Activated naive CD4-positive, alpha-beta T cell treated with anti-CD3 and anti-CD28 coated beads for 36 hours (primary cell): ENCODE measurements at regions of chr5 and their contacts with region 1.

Region 1: GRCh38 chr5:126988021-126988569 is 42.3 kb downstream of the MARCHF3 start:
- DNase-seq: peak; percentile 77
- H3K4me3 Mint-ChIP-seq: peak overlapping the region; percentile 20
- H3K27ac Mint-ChIP-seq: peak overlapping the region; percentile 76
- H3K4me1 Mint-ChIP-seq: peaks cover 51% of the 10 kb centered on the region
- H3K27me3 Mint-ChIP-seq: no peaks in the 10 kb centered on the region

Region 2: DNA sequence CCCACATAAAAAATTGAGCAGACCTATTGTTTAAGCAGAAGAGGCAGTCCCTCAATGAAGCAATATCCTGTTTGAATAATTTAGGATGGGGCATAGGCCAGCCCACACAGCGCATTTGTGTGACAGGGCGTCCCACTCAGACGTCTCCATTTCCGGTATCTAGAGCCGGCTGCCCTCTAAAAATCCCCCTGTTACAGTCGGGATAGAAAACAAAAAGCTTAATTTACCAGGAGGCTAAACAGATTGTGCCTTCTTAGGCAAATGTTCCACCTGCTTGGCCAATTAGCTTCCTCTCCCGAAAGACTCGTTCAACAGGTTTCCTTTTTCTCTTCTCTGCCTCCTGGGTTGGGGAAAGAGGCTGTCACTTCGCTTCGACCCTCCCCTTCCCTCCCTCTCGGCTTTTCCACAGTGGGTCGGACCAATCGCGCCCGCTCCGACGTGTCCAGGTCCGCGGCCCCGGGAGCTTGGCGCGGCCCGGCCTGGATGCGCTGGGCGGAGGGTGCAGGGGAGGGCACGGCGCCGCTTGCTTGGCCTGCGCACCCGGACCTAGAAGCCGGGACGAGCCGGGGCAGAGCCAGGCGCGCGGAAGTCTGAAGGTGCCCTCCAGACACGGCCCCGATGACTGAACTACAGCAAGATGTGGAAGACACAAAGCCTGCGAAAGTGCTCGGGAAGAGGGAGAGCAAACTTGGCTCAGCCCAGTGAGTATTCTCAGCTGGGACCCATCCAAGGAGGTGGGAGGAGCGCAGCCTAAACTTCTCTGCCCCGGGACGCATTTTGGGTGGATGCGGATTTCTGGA is 564.9 kb before region 1 on chr5 and contains the start of gene GRAMD2B:
- CTCF ChIA-PET with region 1: no interaction called
- intact Hi-C with region 1: loop called (anchors 1 kb)
- DNase-seq: peak; percentile 87
- H3K4me3 Mint-ChIP-seq: peak within 1 kb of the TSS; percentile 81
- H3K27ac Mint-ChIP-seq: peak within 1 kb of the TSS; percentile 88
- H3K4me1 Mint-ChIP-seq: peaks cover 29% of the 10 kb centered on the region
- H3K27me3 Mint-ChIP-seq: no peaks in the 10 kb centered on the region
- total RNA-seq, gene GRAMD2B: 8.7 to 10.8 TPM

Region 3: GRCh38 chr5:126693806-126694802 is 294.0 kb before region 1 on chr5:
- CTCF ChIA-PET with region 1: no interaction called
- intact Hi-C with region 1: no loop called
- DNase-seq: no peak
- H3K4me3 Mint-ChIP-seq: no peak overlapping the region
- H3K27ac Mint-ChIP-seq: no peak overlapping the region
- H3K4me1 Mint-ChIP-seq: peaks cover 10% of the 10 kb centered on the region
- H3K27me3 Mint-ChIP-seq: no peaks in the 10 kb centered on the region

Region 4: DNA sequence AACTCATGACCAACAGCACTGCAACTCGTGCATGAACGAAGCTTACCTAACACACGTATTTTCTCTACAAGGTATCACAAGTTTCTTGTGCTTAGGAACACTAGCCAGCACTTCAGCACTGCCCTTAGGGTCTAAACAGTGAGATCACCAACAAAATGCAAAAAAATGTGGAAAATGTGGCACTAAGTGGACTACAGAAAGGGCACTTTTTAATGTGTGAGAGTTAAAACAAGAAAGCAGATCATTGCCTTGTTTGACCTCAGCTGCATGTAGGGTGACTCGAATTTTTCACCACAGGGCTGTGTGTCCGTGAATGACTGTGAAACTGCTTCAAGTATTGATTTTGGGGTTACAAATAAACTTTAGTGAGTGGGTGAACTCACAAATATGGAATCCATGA is 48.2 kb before region 1 on chr5:
- CTCF ChIA-PET with region 1: no interaction called
- intact Hi-C with region 1: loop called (anchors 1 kb)
- DNase-seq: no peak
- H3K4me3 Mint-ChIP-seq: no peak overlapping the region
- H3K27ac Mint-ChIP-seq: no peak overlapping the region
- H3K4me1 Mint-ChIP-seq: peaks cover 12% of the 10 kb centered on the region
- H3K27me3 Mint-ChIP-seq: no peaks in the 10 kb centered on the region

Region 5: DNA sequence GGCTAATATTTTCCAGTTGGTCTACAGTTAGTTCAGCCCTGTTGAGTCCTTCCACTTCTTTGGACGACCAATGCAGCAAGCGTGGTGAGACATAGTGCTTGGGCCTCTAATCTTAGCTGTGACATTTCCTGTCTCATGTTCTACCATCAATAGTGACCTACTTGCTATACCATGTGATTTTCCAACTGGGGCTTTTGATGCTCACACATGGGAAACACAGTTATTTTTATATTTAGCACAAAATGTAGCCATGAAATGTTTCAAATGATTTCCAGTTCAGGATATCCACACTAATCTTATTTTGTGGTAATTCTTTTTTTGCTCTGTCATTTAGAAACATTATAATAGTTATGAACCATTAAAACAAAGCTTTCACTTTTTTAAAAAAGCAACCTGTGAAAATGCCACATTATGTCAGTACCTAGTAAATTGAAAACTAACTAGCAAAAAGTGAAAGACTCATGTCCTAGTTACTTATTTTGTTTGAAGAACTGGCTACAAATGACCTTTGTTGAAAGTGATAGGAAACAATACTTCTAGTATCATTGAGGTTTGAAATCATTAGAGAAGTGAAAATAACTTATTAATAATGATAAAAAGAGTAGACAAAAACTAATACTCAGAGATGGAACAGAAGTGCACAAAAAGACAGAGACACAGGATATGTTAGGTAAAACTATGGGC is 24.0 kb after region 1 on chr5:
- CTCF ChIA-PET with region 1: no interaction called
- intact Hi-C with region 1: loop called (anchors 1 kb)
- DNase-seq: peak; percentile 35
- H3K4me3 Mint-ChIP-seq: no peak overlapping the region
- H3K27ac Mint-ChIP-seq: peak overlapping the region; percentile 78
- H3K4me1 Mint-ChIP-seq: peaks cover 56% of the 10 kb centered on the region
- H3K27me3 Mint-ChIP-seq: no peaks in the 10 kb centered on the region

Region 6: GRCh38 chr5:127072861-127073846 is 85.1 kb after region 1 on chr5 and contains the start of gene C5orf63:
- CTCF ChIA-PET with region 1: interaction called, 3 read pairs
- intact Hi-C with region 1: loop called (anchors 1 kb)
- DNase-seq: peak; percentile 82
- H3K4me3 Mint-ChIP-seq: peak within 1 kb of the TSS; percentile 92
- H3K27ac Mint-ChIP-seq: peak within 1 kb of the TSS; percentile 90
- H3K4me1 Mint-ChIP-seq: peaks cover 21% of the 10 kb centered on the region
- H3K27me3 Mint-ChIP-seq: no peaks in the 10 kb centered on the region
- total RNA-seq, gene C5orf63: 9.4 to 11.6 TPM